Mucosa of descending colon (tissue), 3 donors: ENCODE measurements at regions of chr14 and their contacts with region 1.

Region 1: GRCh38 chr14:71753126-71753830 is 179.0 kb upstream of the RGS6 start:
- DNase-seq: peak; percentile 83 to 93 (median 86)
- ATAC-seq: peak; percentile 93
- H3K4me3 ChIP-seq: no peak overlapping the region
- H3K4me1 ChIP-seq: peaks cover 5% of the 10 kb centered on the region
- CTCF ChIP-seq: peak; percentile 70

Region 2: DNA sequence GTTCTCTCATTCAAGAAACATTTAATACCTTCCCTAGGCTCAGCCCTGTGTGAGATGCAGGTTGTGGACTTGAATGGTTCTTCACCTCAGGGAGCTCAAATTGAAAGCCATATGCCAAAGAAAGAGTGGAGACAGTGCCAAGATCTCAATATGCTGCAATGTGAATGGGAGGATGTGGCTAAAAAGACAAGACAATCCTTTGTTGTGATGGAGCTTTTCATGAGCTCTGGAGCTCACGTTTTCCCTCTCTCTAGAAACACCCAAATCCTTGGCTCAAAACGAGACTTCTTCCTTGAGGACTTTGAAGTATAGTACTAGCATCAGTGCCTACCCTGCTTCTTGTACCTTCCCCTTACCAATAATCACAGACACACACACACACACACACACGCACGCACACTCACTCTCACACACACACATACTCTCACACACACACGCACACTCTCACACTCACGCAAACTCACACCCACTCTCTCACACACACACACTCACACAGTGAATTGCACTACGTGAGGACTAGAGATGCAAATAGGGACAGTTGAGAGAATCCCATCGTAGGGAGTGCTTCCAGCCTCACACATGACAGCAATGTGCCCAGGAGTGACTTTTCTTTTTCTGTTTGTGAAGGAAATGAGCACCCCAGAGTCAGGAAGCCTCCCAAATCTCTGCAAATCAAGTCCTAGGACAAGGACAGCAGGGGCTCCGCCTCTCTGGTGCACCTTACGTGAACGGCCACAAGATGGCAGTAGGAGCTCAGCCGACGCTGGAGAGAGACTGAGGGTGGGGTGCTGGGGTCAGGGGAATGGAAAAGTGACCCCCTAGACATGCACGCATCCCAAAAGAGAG is 614.6 kb before region 1 on chr14:
- intact Hi-C with region 1: loop called (anchors 2 to 5 kb)
- DNase-seq: peak in 2 of 3 donors; percentile 70 to 71
- ATAC-seq: peak; percentile 81
- H3K4me3 ChIP-seq: no peak overlapping the region
- H3K4me1 ChIP-seq: peaks cover 2% of the 10 kb centered on the region
- CTCF ChIP-seq: peak; percentile 89

Region 3: GRCh38 chr14:71452539-71452938 is 300.7 kb before region 1 on chr14:
- intact Hi-C with region 1: no loop called
- DNase-seq: no peak
- ATAC-seq: no peak
- H3K4me3 ChIP-seq: no peak overlapping the region
- H3K4me1 ChIP-seq: no peaks in the 10 kb centered on the region
- CTCF ChIP-seq: no peak

Region 4: GRCh38 chr14:71703477-71703876 is 49.8 kb before region 1 on chr14:
- intact Hi-C with region 1: no loop called
- DNase-seq: no peak
- ATAC-seq: no peak
- H3K4me3 ChIP-seq: no peak overlapping the region
- H3K4me1 ChIP-seq: no peaks in the 10 kb centered on the region
- CTCF ChIP-seq: no peak

Region 5: GRCh38 chr14:71824816-71825215 is 71.5 kb after region 1 on chr14:
- intact Hi-C with region 1: no loop called
- DNase-seq: no peak
- ATAC-seq: no peak
- H3K4me3 ChIP-seq: no peak overlapping the region
- H3K4me1 ChIP-seq: no peaks in the 10 kb centered on the region
- CTCF ChIP-seq: no peak